Caco-2 (cell line): ENCODE measurements at regions of chr3 and their contacts with region 1.

Region 1: GRCh38 chr3:69682878-69683806 is 56.1 kb upstream of the MITF start:
- DNase-seq: peak in 1 of 2 experiments; percentile 52
- H3K4me3 ChIP-seq: no peak overlapping the region
- H3K4me3 Mint-ChIP-seq: no peak overlapping the region
- H3K27ac Mint-ChIP-seq: no peak overlapping the region
- H3K4me1 ChIP-seq: peaks cover 10% of the 10 kb centered on the region; the same call in 1 of the 2 replicates
- H3K4me1 Mint-ChIP-seq: peaks cover 12% of the 10 kb centered on the region
- H3K27me3 ChIP-seq: no peaks in the 10 kb centered on the region
- H3K27me3 Mint-ChIP-seq: no peaks in the 10 kb centered on the region
- CTCF ChIP-seq: no peak

Region 2: DNA sequence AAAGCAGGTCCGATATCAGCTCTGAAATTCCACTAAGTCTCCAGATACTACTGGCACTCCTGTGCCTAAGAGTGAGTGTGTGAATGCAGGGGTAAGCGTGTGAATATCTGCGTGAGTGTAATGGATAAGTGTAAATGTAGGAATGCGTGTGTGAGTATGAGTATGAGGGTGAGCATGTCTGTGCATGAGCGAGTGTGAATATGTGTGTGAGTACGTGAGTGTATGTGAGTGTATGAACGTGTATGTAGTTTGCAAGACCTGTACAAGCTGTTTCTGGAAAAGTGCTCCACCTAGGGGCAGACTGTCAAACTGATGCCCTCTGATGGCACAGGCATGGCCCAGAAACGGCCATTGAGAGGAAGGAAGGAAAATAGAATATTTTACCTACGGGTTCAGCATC is 272.9 kb before region 1 on chr3:
- CTCF ChIA-PET with region 1: no interaction called
- POLR2A ChIA-PET with region 1: no interaction called
- intact Hi-C with region 1: no loop called
- DNase-seq: peak; percentile 71 to 76
- H3K4me3 ChIP-seq: no peak overlapping the region
- H3K4me3 Mint-ChIP-seq: peak overlapping the region; percentile 8
- H3K27ac Mint-ChIP-seq: no peak overlapping the region
- H3K4me1 ChIP-seq: no peaks in the 10 kb centered on the region
- H3K4me1 Mint-ChIP-seq: no peaks in the 10 kb centered on the region
- H3K27me3 ChIP-seq: no peaks in the 10 kb centered on the region
- H3K27me3 Mint-ChIP-seq: no peaks in the 10 kb centered on the region
- CTCF ChIP-seq: peak; percentile 72 to 88

Region 3: GRCh38 chr3:69425261-69425660 is 257.9 kb before region 1 on chr3:
- CTCF ChIA-PET with region 1: no interaction called
- POLR2A ChIA-PET with region 1: no interaction called
- intact Hi-C with region 1: no loop called
- DNase-seq: peak in 1 of 2 experiments; percentile 58
- H3K4me3 ChIP-seq: no peak overlapping the region
- H3K4me3 Mint-ChIP-seq: no peak overlapping the region
- H3K27ac Mint-ChIP-seq: no peak overlapping the region
- H3K4me1 ChIP-seq: peaks cover 15% of the 10 kb centered on the region
- H3K4me1 Mint-ChIP-seq: peaks cover 18% of the 10 kb centered on the region
- H3K27me3 ChIP-seq: no peaks in the 10 kb centered on the region
- H3K27me3 Mint-ChIP-seq: no peaks in the 10 kb centered on the region
- CTCF ChIP-seq: peak; percentile 53 to 57

Region 4: GRCh38 chr3:69784954-69785514 is 101.9 kb after region 1 on chr3:
- CTCF ChIA-PET with region 1: no interaction called
- POLR2A ChIA-PET with region 1: no interaction called
- intact Hi-C with region 1: no loop called
- DNase-seq: no peak
- H3K4me3 ChIP-seq: no peak overlapping the region
- H3K4me3 Mint-ChIP-seq: no peak overlapping the region
- H3K27ac Mint-ChIP-seq: no peak overlapping the region
- H3K4me1 ChIP-seq: peaks cover 24% of the 10 kb centered on the region
- H3K4me1 Mint-ChIP-seq: peaks cover 14% of the 10 kb centered on the region
- H3K27me3 ChIP-seq: no peaks in the 10 kb centered on the region
- H3K27me3 Mint-ChIP-seq: no peaks in the 10 kb centered on the region
- CTCF ChIP-seq: no peak

Region 5: DNA sequence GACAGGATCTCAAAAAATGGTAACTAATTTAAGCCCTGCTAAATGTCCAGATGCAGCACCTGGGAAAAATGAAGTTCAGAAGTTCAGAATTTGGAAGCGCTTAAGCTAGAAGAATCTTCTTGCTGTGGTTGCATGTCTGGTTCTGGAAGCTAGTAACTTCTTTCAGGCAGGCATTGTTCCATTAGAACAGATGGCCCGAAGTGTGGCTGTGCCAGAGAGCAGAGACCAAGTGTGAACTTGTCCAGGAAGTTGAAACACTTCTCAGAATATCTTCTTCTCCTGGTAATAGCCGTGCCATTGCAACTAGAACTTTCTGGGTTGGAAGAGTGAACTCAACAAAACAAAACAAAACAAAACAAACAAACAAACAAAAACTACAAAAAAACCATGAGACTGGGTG is 136.1 kb after region 1 on chr3:
- CTCF ChIA-PET with region 1: no interaction called
- POLR2A ChIA-PET with region 1: no interaction called
- intact Hi-C with region 1: loop called (anchors 1 kb)
- DNase-seq: no peak
- H3K4me3 ChIP-seq: no peak overlapping the region
- H3K4me3 Mint-ChIP-seq: no peak overlapping the region
- H3K27ac Mint-ChIP-seq: no peak overlapping the region
- H3K4me1 ChIP-seq: peaks cover 30% of the 10 kb centered on the region
- H3K4me1 Mint-ChIP-seq: peaks cover 22% of the 10 kb centered on the region
- H3K27me3 ChIP-seq: no peaks in the 10 kb centered on the region
- H3K27me3 Mint-ChIP-seq: no peaks in the 10 kb centered on the region
- CTCF ChIP-seq: no peak